Common myeloid progenitor, CD34-positive (primary cell): ENCODE measurements at regions of chr1 and their contacts with region 1.

Region 1: DNA sequence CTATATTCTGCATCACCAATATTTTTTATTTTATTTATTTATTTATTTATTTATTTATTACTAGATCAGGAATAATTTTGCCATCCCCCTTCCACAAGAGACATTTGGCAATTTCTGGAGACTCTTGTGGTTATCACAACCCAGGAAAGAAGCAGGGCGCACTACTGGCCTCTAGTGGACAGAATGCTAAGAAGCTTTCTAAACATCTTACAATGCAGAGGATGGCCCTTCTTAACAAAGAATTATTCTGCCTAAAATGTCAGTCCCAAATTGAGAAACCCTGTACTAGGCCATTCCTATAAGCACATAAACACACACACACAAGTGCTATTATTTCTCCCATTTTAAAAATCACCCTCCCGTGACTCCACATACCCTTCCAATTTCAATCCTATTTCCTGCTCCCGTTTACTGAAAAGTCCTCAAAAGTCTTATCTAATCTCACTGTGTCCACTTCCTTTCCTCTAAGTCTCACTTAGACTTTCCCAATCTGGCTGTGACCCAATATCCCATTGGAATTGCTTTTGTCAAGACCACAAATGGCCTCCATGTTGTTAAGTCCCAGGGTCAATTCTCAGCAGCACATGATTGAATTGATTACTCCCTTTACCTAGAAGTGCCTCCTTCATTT is 43.7 kb upstream of the RNF11 start:
- DNase-seq: peak; percentile 64 to 83 (median 78)
- H3K4me3 ChIP-seq: no peak overlapping the region
- H3K27ac ChIP-seq: no peak overlapping the region
- H3K4me1 ChIP-seq: peaks cover 0 to 9% (median 2%) of the 10 kb centered on the region in 4 experiments
- H3K27me3 ChIP-seq: no peaks in the 10 kb centered on the region

Region 2: DNA sequence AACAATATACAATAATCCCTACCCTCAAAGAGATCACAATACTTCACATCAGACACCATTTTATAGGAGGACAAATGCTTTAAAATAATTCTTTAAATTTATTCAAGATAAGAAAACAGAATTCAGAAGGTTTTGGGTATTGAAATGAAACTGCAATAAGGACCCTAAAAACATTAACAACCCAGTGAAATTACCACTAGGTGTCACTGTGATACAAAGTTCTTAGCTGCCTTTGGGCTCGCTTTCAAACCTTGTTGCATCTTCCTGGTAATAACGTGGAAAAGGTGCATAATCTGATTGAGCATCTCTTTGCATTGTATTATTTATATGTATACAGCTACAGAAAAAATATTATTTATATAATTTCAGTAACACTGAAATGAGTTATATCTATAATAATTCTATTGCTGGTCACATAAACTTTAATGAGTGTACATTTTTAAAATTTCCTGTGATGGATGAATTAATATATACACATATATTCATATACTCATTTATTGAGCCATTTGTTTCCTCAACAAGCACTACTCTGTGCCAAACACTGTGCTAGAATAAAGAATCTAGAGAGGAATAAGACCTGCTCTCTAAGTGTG is 417.5 kb before region 1 on chr1:
- CTCF ChIA-PET with region 1: interaction called, 43 read pairs
- POLR2A ChIA-PET with region 1: no interaction called
- DNase-seq: peak; percentile 55 to 71 (median 67)
- H3K4me3 ChIP-seq: no peak overlapping the region
- H3K27ac ChIP-seq: no peak overlapping the region
- H3K4me1 ChIP-seq: no peaks in the 10 kb centered on the region
- H3K27me3 ChIP-seq: no peaks in the 10 kb centered on the region

Region 3: DNA sequence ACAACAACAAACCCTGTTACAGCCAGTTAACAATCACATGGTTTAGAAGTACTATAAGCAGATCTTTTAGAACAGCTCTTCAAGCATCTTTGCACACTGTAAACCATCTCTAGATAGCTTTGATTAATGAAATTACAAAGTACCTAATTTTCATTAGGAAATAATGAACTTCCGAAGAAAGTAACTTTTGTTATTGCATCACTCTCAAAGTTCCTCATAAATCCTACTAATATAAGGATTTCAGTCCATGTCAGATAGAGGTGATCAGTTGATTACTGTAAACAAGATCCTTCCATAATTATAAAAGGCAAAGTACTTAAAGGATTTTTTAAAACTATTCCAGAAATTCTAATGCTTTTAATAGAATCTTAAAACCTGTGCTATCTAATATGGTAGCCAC is 290.5 kb before region 1 on chr1:
- CTCF ChIA-PET with region 1: no interaction called
- POLR2A ChIA-PET with region 1: no interaction called
- DNase-seq: no peak
- H3K4me3 ChIP-seq: no peak overlapping the region
- H3K27ac ChIP-seq: no peak overlapping the region
- H3K4me1 ChIP-seq: no peaks in the 10 kb centered on the region
- H3K27me3 ChIP-seq: no peaks in the 10 kb centered on the region

Region 4: DNA sequence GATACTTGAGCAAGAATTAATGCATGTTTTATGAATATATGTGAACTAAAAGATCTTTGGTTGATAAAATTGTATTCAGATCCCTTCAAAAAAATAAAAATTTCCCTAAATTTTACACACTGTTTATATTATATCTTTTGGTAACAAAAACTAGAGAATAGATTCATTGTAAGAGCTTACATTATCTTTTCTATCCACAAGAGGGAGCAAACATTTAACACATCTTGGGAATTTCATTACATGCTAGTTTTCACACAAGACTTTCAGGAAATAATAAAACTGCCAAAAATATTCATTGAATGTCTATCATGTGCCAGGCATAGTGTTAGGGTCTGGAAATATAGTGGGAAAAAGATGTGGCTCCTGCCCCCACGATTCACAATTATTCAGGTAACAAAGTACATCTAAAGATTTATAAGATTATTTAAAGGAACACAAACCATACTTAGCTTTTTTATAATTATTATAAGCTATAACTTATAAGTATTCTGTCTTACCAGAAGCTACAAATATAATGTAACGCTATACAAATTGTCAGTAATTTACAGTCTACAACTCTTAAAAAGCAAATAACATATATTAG is 262.9 kb before region 1 on chr1:
- CTCF ChIA-PET with region 1: interaction called, 20 read pairs
- POLR2A ChIA-PET with region 1: no interaction called
- DNase-seq: peak; percentile 39 to 54 (median 50)
- H3K4me3 ChIP-seq: no peak overlapping the region
- H3K27ac ChIP-seq: no peak overlapping the region
- H3K4me1 ChIP-seq: no peaks in the 10 kb centered on the region
- H3K27me3 ChIP-seq: no peaks in the 10 kb centered on the region

Region 5: GRCh38 chr1:51088488-51088887 is 103.8 kb before region 1 on chr1:
- CTCF ChIA-PET with region 1: no interaction called
- POLR2A ChIA-PET with region 1: no interaction called
- DNase-seq: peak; percentile 7 to 11 (median 9)
- H3K4me3 ChIP-seq: no peak overlapping the region
- H3K27ac ChIP-seq: no peak overlapping the region
- H3K4me1 ChIP-seq: no peaks in the 10 kb centered on the region
- H3K27me3 ChIP-seq: peaks cover 2 to 13% (median 6%) of the 10 kb centered on the region in 5 experiments

Region 6: GRCh38 chr1:51175278-51175677 is 17.1 kb before region 1 on chr1:
- CTCF ChIA-PET with region 1: interaction called, 11 read pairs
- POLR2A ChIA-PET with region 1: no interaction called
- DNase-seq: peak in 1 of 3 donors; percentile 6
- H3K4me3 ChIP-seq: no peak overlapping the region
- H3K27ac ChIP-seq: no peak overlapping the region
- H3K4me1 ChIP-seq: peaks cover 0 to 6% (median 1%) of the 10 kb centered on the region in 4 experiments
- H3K27me3 ChIP-seq: no peaks in the 10 kb centered on the region

Region 7: DNA sequence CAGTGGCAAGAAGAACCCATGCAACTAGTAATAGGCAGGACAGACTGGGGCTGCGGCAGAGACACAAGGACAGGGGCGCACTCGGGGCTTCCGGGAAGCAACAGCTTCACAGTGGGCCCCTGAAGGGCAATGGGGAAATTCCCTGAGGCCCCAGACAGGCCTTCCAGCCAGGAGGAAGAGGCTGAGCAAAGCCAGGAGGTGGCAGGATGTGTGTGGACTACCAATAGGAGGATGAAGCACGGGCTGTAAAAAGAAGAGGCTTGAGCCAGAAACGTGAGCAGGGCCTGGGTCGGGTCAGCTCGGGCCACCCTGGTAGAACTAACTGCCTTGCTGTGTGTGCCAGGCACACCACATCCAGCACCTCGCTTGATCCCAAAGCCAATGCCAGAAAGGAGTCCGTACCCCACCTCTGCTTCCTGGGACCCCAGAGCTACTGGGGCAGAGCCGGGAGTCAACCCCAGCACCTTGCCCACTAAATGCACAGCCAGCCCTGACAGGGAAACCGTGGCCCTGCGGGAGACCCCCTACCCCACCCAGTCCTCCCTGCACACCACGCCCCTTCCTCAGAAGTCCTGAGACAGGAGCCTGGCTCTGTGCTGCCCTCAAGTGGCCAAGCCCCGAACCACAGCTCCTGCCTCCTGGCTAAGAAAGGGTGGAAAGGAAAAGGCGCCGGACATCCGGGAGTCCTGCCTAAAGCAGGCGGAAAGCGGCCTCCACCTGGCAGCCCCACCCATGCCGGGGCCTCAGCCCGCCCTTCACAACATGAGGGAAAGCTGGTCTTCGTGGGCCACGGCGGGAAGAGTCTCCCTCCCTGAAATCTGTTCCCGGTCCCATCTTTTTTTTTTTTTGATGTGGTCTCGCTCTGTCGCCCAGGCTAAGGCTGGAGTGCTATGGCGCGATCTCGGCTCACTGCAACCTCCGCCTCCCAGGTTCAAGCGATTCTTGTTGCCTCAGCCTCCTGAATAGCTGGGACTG is 104.3 kb after region 1 on chr1:
- CTCF ChIA-PET with region 1: interaction called, 10 read pairs
- POLR2A ChIA-PET with region 1: no interaction called
- DNase-seq: peak; percentile 54 to 64 (median 63)
- H3K4me3 ChIP-seq: peak overlapping the region in 6 of 7 experiments; percentile 28 to 77 (median 58)
- H3K27ac ChIP-seq: no peak overlapping the region
- H3K4me1 ChIP-seq: peaks cover 0 to 61% (median 47%) of the 10 kb centered on the region in 4 experiments
- H3K27me3 ChIP-seq: no peaks in the 10 kb centered on the region